ENCODE measurements at regions of chr14 and their contacts with region 1.

Region 1: DNA sequence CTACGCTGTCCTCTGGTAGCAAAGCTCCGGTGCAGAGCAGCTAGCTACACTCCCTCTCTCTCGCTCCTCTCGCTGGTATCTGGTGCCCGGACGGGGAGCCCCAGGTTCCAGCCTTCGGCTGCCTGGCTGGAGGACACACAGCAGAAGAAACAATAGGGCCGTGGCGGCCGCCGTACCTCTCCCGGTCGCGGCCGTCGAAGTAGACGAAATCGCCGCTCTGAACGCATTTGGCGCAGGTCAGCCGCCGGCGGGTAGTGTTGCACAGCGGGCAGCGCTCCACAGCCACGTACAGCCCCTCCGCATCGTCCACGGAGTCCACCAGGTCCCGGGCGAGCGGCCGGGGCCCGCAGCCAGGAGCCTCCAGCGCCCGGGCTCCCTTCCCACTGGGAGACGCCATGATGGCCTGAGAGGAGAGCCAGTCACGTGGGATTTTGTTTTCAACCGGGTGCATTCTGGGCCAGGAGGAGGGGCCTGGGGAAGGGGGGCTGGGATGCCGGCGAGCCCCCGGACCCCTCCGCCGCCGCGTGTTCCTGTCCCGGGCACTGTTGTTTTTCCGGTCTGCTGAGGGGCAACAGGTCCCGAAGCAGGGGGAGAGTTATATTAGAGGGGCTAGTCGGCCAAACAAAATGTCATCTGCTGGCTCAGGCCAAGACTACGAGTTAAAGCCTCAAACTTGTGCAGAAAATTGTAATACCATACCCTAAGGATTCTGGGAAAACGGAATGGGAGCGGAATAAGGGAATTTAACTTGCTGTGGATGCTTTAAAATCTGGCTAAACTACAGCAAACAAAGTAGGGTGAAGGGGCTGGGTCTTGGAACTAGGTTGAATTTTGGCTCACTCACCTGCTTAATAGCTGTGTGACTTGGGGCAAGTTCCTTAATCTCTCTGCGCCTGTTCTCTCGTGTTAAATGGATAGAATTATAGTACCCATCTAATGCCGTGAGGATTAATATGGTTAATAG is at the start of gene ATG14:
- DNase-seq: peak; percentile 82 to 97 (median 90)

Region 2: GRCh38 chr14:55270832-55271565 is 140.7 kb before region 1 on chr14 and contains the start of gene FBXO34:
- intact Hi-C with region 1: loop called (anchors 1 kb)
- DNase-seq: peak; percentile 95 to 100 (median 98)

Region 3: DNA sequence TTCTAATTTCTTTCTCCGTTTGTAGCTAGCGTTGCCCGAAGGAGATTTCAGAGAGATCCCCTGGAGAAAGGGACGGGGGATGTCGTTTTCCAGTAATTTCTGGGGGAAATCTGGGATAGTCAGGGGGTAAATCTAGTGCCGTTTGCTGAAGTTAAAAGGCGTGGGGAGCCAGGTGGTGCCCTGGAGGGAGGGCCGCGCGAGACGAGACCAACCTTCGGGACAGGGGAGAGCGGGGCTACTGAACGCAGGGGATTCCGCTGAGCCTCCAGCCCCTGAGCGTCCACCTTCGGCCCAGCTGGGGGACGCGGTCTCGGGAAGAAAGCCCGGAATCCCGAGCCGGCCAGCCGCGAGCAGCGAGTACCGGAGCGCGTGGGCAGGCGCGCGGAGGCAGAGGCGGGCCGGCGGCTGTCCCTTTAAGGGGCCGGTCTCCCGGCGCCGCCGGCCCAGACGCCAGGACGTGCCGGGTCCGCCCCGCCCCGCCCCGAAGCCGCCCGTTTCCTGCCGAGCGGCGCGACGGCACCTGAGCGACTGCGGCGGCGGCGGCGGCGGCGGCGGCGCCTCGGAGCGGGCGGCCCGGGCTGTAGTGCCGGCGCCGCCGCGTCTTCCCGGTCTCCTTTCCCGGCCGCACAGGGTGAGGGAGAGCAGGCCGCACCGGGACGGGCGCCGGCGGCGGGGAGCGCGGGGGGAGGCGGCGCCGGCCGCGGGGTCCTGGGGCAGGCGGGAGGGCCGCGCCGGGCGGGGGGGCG is 168.2 kb after region 1 on chr14 and contains the start of gene KTN1:
- intact Hi-C with region 1: loop called (anchors 5 kb)
- DNase-seq: peak; percentile 58 to 97 (median 79)